ENCODE measurements at regions of chr11 and their contacts with region 1.

Region 1: DNA sequence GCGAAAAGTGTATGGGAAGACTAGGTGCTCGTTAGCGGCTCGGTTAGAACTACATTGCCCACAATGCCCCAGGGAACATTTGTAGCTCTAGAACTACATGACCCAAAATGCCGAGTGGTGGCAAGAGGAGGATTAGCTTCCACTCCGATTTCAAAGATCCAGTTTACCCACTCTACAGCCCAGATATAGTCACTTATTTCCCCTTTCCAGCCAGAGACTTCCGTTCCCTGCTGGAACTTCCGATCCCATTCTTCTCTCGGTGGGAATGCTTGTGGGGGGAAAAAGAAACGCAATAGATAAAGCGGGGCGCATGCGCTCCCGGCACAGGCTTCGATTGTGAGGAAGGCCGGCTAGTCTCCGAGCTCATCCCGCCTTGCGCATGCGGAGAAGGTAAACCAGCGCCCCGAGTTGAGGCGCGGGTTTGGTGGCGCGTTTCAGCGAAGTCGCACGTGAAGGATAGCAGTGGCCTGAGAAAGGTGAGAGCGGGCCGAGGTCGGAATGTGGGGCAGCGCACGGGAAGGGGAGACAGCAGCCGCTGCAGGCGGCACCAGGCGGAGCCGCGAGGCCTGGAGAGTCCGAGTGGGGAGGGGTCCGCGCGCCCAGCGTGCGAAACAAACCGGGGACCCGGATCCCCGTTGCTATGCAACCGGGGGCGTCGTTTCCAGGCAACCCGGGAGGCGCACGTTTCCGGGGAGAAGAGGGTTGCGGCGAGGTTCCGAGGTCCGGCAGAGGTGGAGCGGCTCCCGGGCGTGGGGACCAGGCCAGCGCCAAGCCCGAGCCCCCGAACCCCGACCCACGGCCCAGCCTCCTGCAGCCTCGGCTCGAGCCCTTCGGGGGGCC is at the start of gene TMEM109:
- DNase-seq: peak; percentile 90 to 94 (median 91)
- ATAC-seq: peak; percentile 81 to 88 (median 88)
- H3K4me3 ChIP-seq: peak within 1 kb of the TSS; percentile 64 to 95 (median 81)
- H3K27ac ChIP-seq: peak within 1 kb of the TSS; percentile 75 to 98 (median 94)
- H3K4me1 ChIP-seq: peaks cover 0 to 85% (median 56%) of the 10 kb centered on the region in 12 donors
- H3K27me3 ChIP-seq: no peaks in the 10 kb centered on the region
- CTCF ChIP-seq: no peak
- POLR2A ChIP-seq: peak in 1 of 2 donors; percentile 66
- total RNA-seq, gene TMEM109: 82.9 to 123 (median 96.3) TPM

Region 2: DNA sequence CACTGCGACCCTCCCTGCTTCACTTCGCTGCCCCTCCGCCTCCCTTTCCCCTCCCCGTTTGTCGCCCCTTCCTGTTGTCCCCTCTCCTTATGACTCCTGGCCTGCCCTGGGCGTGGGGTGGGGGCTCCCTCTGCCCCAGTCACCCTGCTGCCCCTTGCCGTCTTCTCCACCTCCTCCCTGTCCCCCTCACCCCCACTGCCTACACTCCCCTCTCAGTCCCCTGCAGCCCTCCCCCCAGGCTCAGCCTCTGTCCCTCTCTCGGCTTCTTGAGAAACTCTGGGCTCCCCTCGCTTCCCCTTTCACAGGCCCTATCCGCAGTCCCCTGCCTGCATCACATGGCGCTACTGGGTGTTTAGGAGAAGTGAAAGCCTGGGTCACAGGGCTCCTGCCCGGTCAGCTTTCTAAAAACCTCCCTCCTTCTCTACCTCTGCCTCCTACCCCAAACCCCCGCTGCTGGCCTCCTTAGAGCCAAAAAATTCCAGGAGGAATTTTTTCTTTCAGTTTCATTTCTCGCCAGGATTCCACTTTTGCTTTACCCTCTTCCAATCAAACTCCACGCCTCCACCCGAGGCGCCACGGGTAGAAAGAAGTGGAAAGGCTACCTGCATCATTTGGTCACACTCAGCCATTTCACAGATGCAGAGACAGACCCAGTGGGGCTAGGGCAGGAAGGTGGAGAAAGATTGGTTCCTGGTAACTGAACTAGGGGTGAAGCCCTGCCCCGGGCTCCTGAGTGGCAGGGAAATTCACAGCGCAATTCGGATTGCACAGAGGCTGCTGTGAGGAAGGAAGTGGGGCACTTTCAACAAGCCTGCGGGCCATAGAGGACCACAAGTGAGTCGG is 38.1 kb after region 1 on chr11 and contains the start of gene SLC15A3:
- intact Hi-C with region 1: loop called in 4 of 10 experiments (anchors 2 to 5 kb)
- DNase-seq: peak; percentile 70 to 84 (median 77)
- ATAC-seq: peak; percentile 67 to 86 (median 78)
- H3K4me3 ChIP-seq: peak within 1 kb of the TSS; percentile 45 to 77 (median 58)
- H3K27ac ChIP-seq: peak within 1 kb of the TSS; percentile 67 to 96 (median 87)
- H3K4me1 ChIP-seq: peaks cover 0 to 65% (median 15%) of the 10 kb centered on the region in 12 donors
- H3K27me3 ChIP-seq: peaks cover 0 to 5% (median 0%) of the 10 kb centered on the region in 9 donors
- CTCF ChIP-seq: no peak
- POLR2A ChIP-seq: peak in 1 of 2 donors; percentile 9
- total RNA-seq, gene SLC15A3: 11.9 to 85.1 (median 19.1) TPM

Region 3: DNA sequence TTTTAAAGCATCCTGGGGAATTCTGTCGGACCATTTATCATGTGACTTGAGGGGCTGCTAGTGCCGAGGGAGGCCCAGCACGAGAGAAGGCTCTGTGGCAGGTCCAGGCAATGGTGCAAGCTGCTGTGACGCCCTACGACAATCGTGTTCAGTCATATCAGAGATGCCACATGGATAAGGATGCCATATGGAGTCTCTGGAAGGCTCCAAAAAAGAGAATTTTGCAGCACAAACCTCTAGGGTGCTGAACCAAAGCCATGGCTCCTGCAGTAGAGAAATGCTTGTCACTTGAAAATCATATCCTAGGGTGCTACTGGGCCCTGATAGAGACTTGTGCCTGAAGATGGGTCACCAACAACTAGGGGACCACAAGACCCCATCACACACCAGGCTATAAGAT is 50.8 kb after region 1 on chr11:
- intact Hi-C with region 1: loop called in 1 of 10 experiments (anchors 5 kb)
- DNase-seq: no peak
- ATAC-seq: no peak
- H3K4me3 ChIP-seq: no peak overlapping the region
- H3K27ac ChIP-seq: no peak overlapping the region
- H3K4me1 ChIP-seq: peaks cover 0 to 5% (median 0%) of the 10 kb centered on the region in 12 donors
- H3K27me3 ChIP-seq: peaks cover 0 to 15% (median 0%) of the 10 kb centered on the region in 9 donors
- CTCF ChIP-seq: no peak
- POLR2A ChIP-seq: no peak